ENCODE measurements at regions of chr17 and their contacts with region 1.

Region 1: GRCh38 chr17:41548844-41549595 is 20.9 kb upstream of the KRT19 start:
- DNase-seq: peak; percentile 91
- ATAC-seq: peak; percentile 89
- H3K4me3 Mint-ChIP-seq: peak overlapping the region; percentile 47; the same call in 1 of the 2 replicates
- H3K27ac Mint-ChIP-seq: 0 out of 2 replicates have a peak overlapping the region, but pooled peaks have one; percentile 65
- H3K4me1 Mint-ChIP-seq: peaks cover 26% of the 10 kb centered on the region
- H3K27me3 Mint-ChIP-seq: peaks cover 5% of the 10 kb centered on the region
- CTCF ChIP-seq: peak; percentile 80

Region 2: GRCh38 chr17:41082626-41083025 is 466.4 kb before region 1 on chr17:
- CTCF ChIA-PET with region 1: no interaction called
- POLR2A ChIA-PET with region 1: no interaction called
- DNase-seq: no peak
- ATAC-seq: no peak
- H3K4me3 Mint-ChIP-seq: no peak overlapping the region
- H3K27ac Mint-ChIP-seq: no peak overlapping the region
- H3K4me1 Mint-ChIP-seq: peaks cover 9% of the 10 kb centered on the region
- H3K27me3 Mint-ChIP-seq: no peaks in the 10 kb centered on the region; the same call in 1 of the 2 replicates
- CTCF ChIP-seq: no peak

Region 3: GRCh38 chr17:41329281-41329948 is 219.6 kb before region 1 on chr17:
- CTCF ChIA-PET with region 1: interaction called, 17 read pairs
- POLR2A ChIA-PET with region 1: no interaction called
- DNase-seq: peak; percentile 76
- ATAC-seq: peak; percentile 90
- H3K4me3 Mint-ChIP-seq: no peak overlapping the region
- H3K27ac Mint-ChIP-seq: no peak overlapping the region
- H3K4me1 Mint-ChIP-seq: no peaks in the 10 kb centered on the region
- H3K27me3 Mint-ChIP-seq: no peaks in the 10 kb centered on the region
- CTCF ChIP-seq: peak; percentile 86

Region 4: GRCh38 chr17:41446806-41447205 is 102.2 kb before region 1 on chr17:
- CTCF ChIA-PET with region 1: interaction called, 12 read pairs
- POLR2A ChIA-PET with region 1: no interaction called
- DNase-seq: no peak
- ATAC-seq: no peak
- H3K4me3 Mint-ChIP-seq: no peak overlapping the region
- H3K27ac Mint-ChIP-seq: no peak overlapping the region
- H3K4me1 Mint-ChIP-seq: 0 out of 2 replicates have a peak, but pooled peaks cover 4% of the 10 kb centered on the region
- H3K27me3 Mint-ChIP-seq: peaks cover 8% of the 10 kb centered on the region
- CTCF ChIP-seq: no peak

Region 5: DNA sequence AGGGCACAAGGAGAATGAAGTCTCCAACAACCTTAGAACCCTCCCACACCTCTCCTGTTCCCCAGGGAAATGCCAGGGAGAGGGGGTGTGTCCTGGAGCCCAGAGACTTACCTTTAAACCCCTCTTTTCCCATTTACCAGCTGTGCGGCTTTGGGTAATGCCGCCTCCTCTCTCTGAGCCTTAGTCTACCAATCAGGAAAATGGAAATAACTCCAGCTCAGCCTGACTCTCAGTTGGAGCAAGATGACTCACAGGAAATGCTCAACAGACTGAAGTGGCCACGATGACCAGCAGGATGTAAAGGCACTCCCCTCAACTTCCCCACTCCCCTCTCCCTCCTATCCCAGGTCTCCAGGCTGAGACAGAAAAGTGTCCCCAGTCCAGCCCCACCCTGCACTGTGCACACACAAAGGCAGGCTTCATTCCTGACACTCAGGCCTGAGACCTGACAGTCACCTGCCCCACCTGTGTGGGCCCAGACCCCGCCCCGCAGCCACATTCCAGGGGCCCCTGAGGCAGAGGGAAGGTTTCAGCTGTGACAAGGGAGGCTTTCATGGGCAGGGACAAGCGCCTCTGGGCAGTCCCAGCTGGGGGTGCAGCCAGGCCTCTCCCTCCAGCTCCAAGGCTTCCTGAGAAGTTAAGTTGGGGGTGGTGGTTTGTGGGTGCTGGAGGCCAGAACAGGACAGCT is 27.3 kb before region 1 on chr17:
- CTCF ChIA-PET with region 1: interaction called, 125 read pairs
- POLR2A ChIA-PET with region 1: interaction called, 22 read pairs
- DNase-seq: peak; percentile 57
- ATAC-seq: peak; percentile 46
- H3K4me3 Mint-ChIP-seq: no peak overlapping the region
- H3K27ac Mint-ChIP-seq: peak overlapping the region; percentile 48; the same call in 1 of the 2 replicates
- H3K4me1 Mint-ChIP-seq: peaks cover 25% of the 10 kb centered on the region
- H3K27me3 Mint-ChIP-seq: no peaks in the 10 kb centered on the region; the same call in 1 of the 2 replicates
- CTCF ChIP-seq: no peak

Region 6: GRCh38 chr17:41579484-41580243 is 30.6 kb after region 1 on chr17:
- CTCF ChIA-PET with region 1: interaction called, 75 read pairs
- POLR2A ChIA-PET with region 1: no interaction called
- DNase-seq: peak; percentile 97
- ATAC-seq: peak; percentile 99
- H3K4me3 Mint-ChIP-seq: no peak overlapping the region
- H3K27ac Mint-ChIP-seq: no peak overlapping the region
- H3K4me1 Mint-ChIP-seq: peaks cover 11% of the 10 kb centered on the region
- H3K27me3 Mint-ChIP-seq: peaks cover 29% of the 10 kb centered on the region
- CTCF ChIP-seq: peak; percentile 84

Region 7: GRCh38 chr17:41635121-41636097 is 86.4 kb after region 1 on chr17:
- CTCF ChIA-PET with region 1: interaction called, 319 read pairs
- POLR2A ChIA-PET with region 1: no interaction called
- DNase-seq: no peak
- ATAC-seq: peak; percentile 62
- H3K4me3 Mint-ChIP-seq: no peak overlapping the region
- H3K27ac Mint-ChIP-seq: peak overlapping the region; percentile 84
- H3K4me1 Mint-ChIP-seq: peaks cover 10% of the 10 kb centered on the region
- H3K27me3 Mint-ChIP-seq: no peaks in the 10 kb centered on the region
- CTCF ChIP-seq: no peak

Region 8: DNA sequence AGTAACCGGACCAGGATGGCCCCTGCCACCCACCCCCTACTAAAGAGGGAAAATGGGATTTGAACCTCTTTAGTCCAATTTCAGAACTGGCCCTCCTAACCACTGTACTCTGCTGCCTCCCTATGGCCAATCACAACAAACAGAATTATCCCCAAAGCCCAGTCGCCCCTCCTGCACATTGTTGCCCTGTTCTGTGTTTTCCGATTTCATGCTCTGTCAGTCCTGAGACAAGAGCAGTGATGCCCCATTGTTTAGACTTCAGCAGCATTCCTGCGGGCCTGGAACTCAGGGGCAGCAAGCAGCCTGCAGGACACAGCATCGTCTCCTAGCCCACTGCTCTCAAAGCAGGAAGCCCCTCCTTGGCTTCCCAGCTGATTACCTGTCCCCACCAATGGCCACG is 336.7 kb after region 1 on chr17:
- CTCF ChIA-PET with region 1: no interaction called
- POLR2A ChIA-PET with region 1: no interaction called
- DNase-seq: no peak
- ATAC-seq: no peak
- H3K4me3 Mint-ChIP-seq: no peak overlapping the region
- H3K27ac Mint-ChIP-seq: 0 out of 2 replicates have a peak overlapping the region, but pooled peaks have one; percentile 27
- H3K4me1 Mint-ChIP-seq: no peaks in the 10 kb centered on the region
- H3K27me3 Mint-ChIP-seq: no peaks in the 10 kb centered on the region
- CTCF ChIP-seq: no peak

Measured in WTC11 (cell line).